Naive thymus-derived CD4-positive, alpha-beta T cell (primary cell): ENCODE measurements at regions of chrX and their contacts with region 1.

Region 1: GRCh38 chrX:71550578-71550977 is 17.7 kb downstream of the OGT start:
- DNase-seq: no peak
- ATAC-seq: no peak
- H3K4me3 ChIP-seq: no peak overlapping the region
- H3K4me3 Mint-ChIP-seq: no peak overlapping the region
- H3K27ac ChIP-seq: no peak overlapping the region
- H3K27ac Mint-ChIP-seq: no peak overlapping the region
- H3K4me1 ChIP-seq: peaks cover 0 to 7% of the 10 kb centered on the region in 2 donors
- H3K4me1 Mint-ChIP-seq: peaks cover 3 to 25% (median 12%) of the 10 kb centered on the region in 7 donors
- H3K27me3 ChIP-seq: no peaks in the 10 kb centered on the region
- H3K27me3 Mint-ChIP-seq: no peaks in the 10 kb centered on the region

Region 2: GRCh38 chrX:71393919-71394318 is 156.7 kb before region 1 on chrX:
- CTCF ChIA-PET with region 1: no interaction called
- POLR2A ChIA-PET with region 1: no interaction called
- intact Hi-C with region 1: loop called in 1 of 2 experiments (anchors 10 kb)
- DNase-seq: no peak
- ATAC-seq: no peak
- H3K4me3 ChIP-seq: no peak overlapping the region
- H3K4me3 Mint-ChIP-seq: no peak overlapping the region
- H3K27ac ChIP-seq: no peak overlapping the region
- H3K27ac Mint-ChIP-seq: peak overlapping the region in 1 of 9 donors; percentile 59
- H3K4me1 ChIP-seq: no peaks in the 10 kb centered on the region
- H3K4me1 Mint-ChIP-seq: peaks cover 0 to 13% (median 10%) of the 10 kb centered on the region in 7 donors
- H3K27me3 ChIP-seq: no peaks in the 10 kb centered on the region
- H3K27me3 Mint-ChIP-seq: no peaks in the 10 kb centered on the region

Region 3: GRCh38 chrX:71454222-71454621 is 96.4 kb before region 1 on chrX:
- CTCF ChIA-PET with region 1: no interaction called
- POLR2A ChIA-PET with region 1: no interaction called
- intact Hi-C with region 1: no loop called
- DNase-seq: no peak
- ATAC-seq: no peak
- H3K4me3 ChIP-seq: no peak overlapping the region
- H3K4me3 Mint-ChIP-seq: no peak overlapping the region
- H3K27ac ChIP-seq: no peak overlapping the region
- H3K27ac Mint-ChIP-seq: peak overlapping the region in 1 of 9 donors; percentile 43
- H3K4me1 ChIP-seq: no peaks in the 10 kb centered on the region
- H3K4me1 Mint-ChIP-seq: peaks cover 0 to 3% (median 0%) of the 10 kb centered on the region in 7 donors
- H3K27me3 ChIP-seq: no peaks in the 10 kb centered on the region
- H3K27me3 Mint-ChIP-seq: no peaks in the 10 kb centered on the region